Activated B cell treated with CpG ODN at 0.5 μM for 24 hours (primary cell): ENCODE measurements at regions of chr7 and their contacts with region 1.

Region 1: DNA sequence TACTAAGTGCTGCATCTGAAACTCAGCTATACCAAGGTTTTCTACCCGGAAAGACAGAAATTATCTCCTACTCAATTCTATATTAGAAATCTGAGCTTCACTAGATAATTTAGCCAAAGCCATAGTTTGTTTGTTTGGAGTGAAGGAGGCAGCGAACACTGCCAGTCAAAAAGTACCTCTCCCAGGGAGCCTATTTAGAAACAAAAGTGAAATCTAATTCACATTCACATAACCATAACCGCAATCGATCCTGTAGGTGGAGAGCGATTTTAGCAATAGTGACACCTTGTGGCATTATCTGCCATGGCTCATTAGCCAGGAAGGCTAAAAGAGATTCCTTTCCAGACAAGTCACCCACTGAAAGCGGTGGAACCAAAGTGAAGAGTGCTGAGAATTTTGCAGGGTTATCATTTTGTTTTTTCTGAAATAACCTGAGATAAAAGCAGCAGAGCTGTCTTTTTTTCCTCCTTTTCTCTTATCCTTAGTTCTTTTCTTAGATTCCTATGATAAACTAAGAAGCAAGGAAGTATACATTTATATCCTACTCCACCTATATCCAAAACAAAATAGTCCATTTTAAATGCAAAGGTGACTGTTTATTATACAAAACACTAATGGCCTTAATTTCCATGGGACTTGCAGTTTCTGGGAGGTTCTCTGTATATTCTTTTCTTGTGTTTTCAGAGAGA is 83.7 kb upstream of the BET1 start:
- DNase-seq: no peak
- ATAC-seq: peak; percentile 92
- H3K4me3 Mint-ChIP-seq: peak overlapping the region; percentile 82
- H3K27ac Mint-ChIP-seq: peak overlapping the region; percentile 89
- H3K4me1 Mint-ChIP-seq: peaks cover 19% of the 10 kb centered on the region
- H3K27me3 Mint-ChIP-seq: no peaks in the 10 kb centered on the region
- CTCF ChIP-seq: no peak

Region 2: GRCh38 chr7:92953657-92954056 is 1134.2 kb before region 1 on chr7:
- CTCF ChIA-PET with region 1: no interaction called
- POLR2A ChIA-PET with region 1: no interaction called
- intact Hi-C with region 1: no loop called
- DNase-seq: no peak
- ATAC-seq: no peak
- H3K4me3 Mint-ChIP-seq: no peak overlapping the region
- H3K27ac Mint-ChIP-seq: no peak overlapping the region
- H3K4me1 Mint-ChIP-seq: no peaks in the 10 kb centered on the region
- H3K27me3 Mint-ChIP-seq: no peaks in the 10 kb centered on the region
- CTCF ChIP-seq: no peak

Region 3: DNA sequence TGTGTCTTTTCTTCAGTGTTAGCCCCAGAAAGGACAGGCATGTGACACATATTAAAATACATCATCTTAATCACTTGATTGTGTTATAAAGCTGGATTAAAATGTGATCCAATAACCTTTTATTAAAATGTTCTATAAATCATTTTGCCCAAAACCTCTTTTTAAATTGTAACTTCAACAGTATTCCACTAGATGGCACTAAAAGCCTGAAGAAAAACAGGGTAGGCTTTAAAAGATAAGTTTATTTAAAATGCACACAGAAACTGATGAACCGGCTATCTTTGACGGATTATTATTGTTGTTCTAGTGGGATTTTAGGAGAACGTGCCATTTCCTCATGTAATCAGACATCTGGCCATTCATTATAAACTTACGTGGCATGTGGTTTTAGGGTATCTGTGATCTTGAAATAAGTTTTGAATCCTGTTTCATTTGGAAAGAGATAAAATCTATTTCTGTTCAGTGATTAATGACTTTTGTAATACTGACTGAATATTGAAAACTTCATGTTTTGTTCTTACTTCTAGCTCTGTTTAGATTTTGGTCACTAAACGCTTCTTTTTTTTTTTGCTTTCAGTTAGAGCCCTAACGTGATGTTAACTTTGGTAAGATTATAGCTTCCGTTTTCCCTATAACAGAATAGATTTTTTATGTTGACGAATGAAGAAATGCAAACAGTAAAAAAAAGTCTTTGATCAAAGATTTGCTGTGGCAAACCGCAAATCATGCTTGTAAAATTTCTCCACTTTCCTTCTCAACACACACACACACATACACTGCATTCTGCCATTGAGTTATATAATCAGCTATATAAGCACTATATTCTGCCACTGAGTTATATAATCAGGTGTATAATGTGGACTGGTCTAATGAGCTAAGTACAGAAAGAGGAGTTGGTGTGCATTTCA is 842.0 kb before region 1 on chr7:
- CTCF ChIA-PET with region 1: interaction called, 3 read pairs
- POLR2A ChIA-PET with region 1: no interaction called
- intact Hi-C with region 1: loop called (anchors 1 kb)
- DNase-seq: no peak
- ATAC-seq: peak; percentile 25
- H3K4me3 Mint-ChIP-seq: no peak overlapping the region
- H3K27ac Mint-ChIP-seq: no peak overlapping the region
- H3K4me1 Mint-ChIP-seq: peaks cover 2% of the 10 kb centered on the region
- H3K27me3 Mint-ChIP-seq: no peaks in the 10 kb centered on the region
- CTCF ChIP-seq: peak; percentile 42

Region 4: DNA sequence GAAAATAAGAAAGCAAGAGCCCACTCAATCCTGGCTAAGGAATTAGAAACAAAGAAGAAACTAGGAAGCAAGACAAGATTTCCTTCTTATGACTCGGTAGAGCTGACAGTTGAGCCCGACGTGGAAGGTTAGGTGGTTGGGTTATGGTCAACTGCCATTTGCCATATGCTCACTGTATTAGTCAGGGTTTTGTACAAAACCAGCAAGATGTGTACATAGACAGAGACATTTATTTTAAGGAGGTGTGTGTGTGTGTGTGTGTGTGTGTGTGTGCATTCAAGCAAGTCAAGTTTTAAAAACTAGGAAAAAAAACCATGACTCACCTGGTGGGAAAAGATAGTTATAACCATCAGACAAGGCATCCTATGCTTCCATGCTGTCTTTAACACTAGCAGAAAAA is 697.1 kb before region 1 on chr7:
- CTCF ChIA-PET with region 1: no interaction called
- POLR2A ChIA-PET with region 1: no interaction called
- intact Hi-C with region 1: no loop called
- DNase-seq: no peak
- ATAC-seq: no peak
- H3K4me3 Mint-ChIP-seq: no peak overlapping the region
- H3K27ac Mint-ChIP-seq: no peak overlapping the region
- H3K4me1 Mint-ChIP-seq: no peaks in the 10 kb centered on the region
- H3K27me3 Mint-ChIP-seq: peaks cover 13% of the 10 kb centered on the region
- CTCF ChIP-seq: no peak

Region 5: GRCh38 chr7:93622036-93623033 is 465.5 kb before region 1 on chr7:
- CTCF ChIA-PET with region 1: no interaction called
- POLR2A ChIA-PET with region 1: no interaction called
- intact Hi-C with region 1: loop called (anchors 2 kb)
- DNase-seq: no peak
- ATAC-seq: no peak
- H3K4me3 Mint-ChIP-seq: no peak overlapping the region
- H3K27ac Mint-ChIP-seq: no peak overlapping the region
- H3K4me1 Mint-ChIP-seq: no peaks in the 10 kb centered on the region
- H3K27me3 Mint-ChIP-seq: peaks cover 1% of the 10 kb centered on the region
- CTCF ChIP-seq: no peak

Region 6: GRCh38 chr7:93861325-93861949 is 226.4 kb before region 1 on chr7:
- CTCF ChIA-PET with region 1: no interaction called
- POLR2A ChIA-PET with region 1: no interaction called
- intact Hi-C with region 1: no loop called
- DNase-seq: no peak
- ATAC-seq: no peak
- H3K4me3 Mint-ChIP-seq: no peak overlapping the region
- H3K27ac Mint-ChIP-seq: no peak overlapping the region
- H3K4me1 Mint-ChIP-seq: no peaks in the 10 kb centered on the region
- H3K27me3 Mint-ChIP-seq: peaks cover 6% of the 10 kb centered on the region
- CTCF ChIP-seq: no peak

Region 7: DNA sequence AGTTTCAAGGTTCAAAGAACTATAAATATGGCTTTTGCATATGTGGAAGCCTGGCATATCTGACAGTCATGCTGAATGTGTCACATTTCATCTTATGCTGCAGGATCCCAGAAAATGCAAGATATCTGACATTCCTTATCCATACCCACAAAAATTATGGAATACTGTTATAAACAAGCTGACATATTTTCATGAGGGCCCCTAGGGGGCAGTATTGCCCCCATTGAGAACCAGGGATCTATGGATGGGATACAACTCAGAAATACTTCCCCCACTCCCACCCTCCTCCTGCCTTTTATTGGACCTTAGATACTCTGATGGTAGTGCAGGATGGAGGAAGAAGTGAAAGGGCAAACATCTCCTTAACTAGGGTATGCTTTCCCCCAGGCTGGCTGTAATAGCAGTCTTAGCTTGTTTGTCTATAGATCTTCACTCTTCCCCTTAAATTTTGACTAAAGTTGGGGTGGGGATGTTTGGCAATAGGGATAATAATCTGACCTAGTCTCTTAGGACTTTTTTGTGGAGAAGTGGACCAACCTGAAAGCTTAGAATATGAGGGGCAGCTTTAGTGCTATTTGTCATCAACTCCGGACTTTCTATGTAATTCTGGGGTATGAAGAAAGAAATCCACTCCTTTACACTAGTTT is 184.9 kb before region 1 on chr7:
- CTCF ChIA-PET with region 1: interaction called, 117 read pairs
- POLR2A ChIA-PET with region 1: no interaction called
- intact Hi-C with region 1: loop called (anchors 1 kb)
- DNase-seq: no peak
- ATAC-seq: no peak
- H3K4me3 Mint-ChIP-seq: no peak overlapping the region
- H3K27ac Mint-ChIP-seq: no peak overlapping the region
- H3K4me1 Mint-ChIP-seq: no peaks in the 10 kb centered on the region
- H3K27me3 Mint-ChIP-seq: peaks cover 17% of the 10 kb centered on the region
- CTCF ChIP-seq: peak; percentile 74

Region 8: DNA sequence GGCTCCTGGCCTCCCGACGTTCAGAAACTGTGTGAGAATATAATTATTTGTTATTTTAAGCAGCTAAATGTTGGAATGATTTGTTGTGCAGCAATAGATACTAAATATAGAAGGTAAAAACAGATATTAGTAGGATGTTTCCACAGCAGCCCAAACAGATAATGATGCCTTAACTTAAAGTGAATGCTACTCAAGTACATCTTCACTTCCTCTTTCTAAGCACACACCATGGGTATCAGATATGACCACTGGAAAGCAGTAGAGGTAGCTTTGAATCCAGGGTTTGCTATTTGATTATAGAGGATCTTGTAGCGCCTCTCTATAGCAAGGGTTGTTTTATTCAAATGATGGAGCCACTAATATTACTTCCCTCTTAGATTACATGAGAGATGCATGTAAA is 45.4 kb before region 1 on chr7:
- CTCF ChIA-PET with region 1: interaction called, 5 read pairs
- POLR2A ChIA-PET with region 1: no interaction called
- intact Hi-C with region 1: loop called (anchors 1 kb)
- DNase-seq: no peak
- ATAC-seq: peak; percentile 80
- H3K4me3 Mint-ChIP-seq: no peak overlapping the region
- H3K27ac Mint-ChIP-seq: no peak overlapping the region
- H3K4me1 Mint-ChIP-seq: peaks cover 60% of the 10 kb centered on the region
- H3K27me3 Mint-ChIP-seq: no peaks in the 10 kb centered on the region
- CTCF ChIP-seq: no peak

Region 9: DNA sequence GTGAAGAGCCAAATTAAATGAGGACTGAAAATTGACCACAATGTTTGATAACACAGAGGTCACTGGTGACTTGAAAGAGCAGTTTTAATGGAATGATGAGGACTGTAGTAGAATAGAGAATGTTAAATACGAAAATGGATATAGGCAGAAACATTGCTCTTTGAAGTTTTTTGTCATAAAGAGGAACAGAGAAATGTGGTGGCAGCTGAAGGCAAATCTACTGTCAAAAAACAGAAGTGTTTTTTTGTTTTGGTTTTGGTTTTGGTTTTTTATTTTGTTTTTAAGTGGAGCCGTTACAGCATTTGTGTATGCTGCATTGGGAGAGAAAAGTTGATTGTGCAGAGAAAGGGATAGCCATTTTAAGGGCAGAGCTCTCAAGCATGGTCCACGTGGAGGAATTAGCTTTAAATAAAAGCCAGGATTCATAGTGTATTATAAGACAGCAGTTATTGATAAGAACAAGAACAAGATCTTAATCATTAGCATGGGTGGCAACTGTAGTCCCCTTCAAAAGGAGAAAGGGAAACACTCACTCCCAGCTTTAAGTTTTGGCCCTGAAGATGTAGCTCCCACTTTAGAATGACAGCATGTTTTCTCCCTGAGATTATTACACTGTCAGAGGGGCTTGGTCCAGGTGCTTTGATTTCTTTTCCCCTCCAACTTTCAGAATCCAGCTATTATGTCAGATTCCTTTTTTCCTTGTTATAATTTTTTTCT is 73.1 kb after region 1 on chr7:
- CTCF ChIA-PET with region 1: interaction called, 6 read pairs
- POLR2A ChIA-PET with region 1: no interaction called
- intact Hi-C with region 1: loop called (anchors 1 kb)
- DNase-seq: no peak
- ATAC-seq: peak; percentile 79
- H3K4me3 Mint-ChIP-seq: peak overlapping the region; percentile 78
- H3K27ac Mint-ChIP-seq: peak overlapping the region; percentile 89
- H3K4me1 Mint-ChIP-seq: peaks cover 41% of the 10 kb centered on the region
- H3K27me3 Mint-ChIP-seq: no peaks in the 10 kb centered on the region
- CTCF ChIP-seq: no peak

Region 10: DNA sequence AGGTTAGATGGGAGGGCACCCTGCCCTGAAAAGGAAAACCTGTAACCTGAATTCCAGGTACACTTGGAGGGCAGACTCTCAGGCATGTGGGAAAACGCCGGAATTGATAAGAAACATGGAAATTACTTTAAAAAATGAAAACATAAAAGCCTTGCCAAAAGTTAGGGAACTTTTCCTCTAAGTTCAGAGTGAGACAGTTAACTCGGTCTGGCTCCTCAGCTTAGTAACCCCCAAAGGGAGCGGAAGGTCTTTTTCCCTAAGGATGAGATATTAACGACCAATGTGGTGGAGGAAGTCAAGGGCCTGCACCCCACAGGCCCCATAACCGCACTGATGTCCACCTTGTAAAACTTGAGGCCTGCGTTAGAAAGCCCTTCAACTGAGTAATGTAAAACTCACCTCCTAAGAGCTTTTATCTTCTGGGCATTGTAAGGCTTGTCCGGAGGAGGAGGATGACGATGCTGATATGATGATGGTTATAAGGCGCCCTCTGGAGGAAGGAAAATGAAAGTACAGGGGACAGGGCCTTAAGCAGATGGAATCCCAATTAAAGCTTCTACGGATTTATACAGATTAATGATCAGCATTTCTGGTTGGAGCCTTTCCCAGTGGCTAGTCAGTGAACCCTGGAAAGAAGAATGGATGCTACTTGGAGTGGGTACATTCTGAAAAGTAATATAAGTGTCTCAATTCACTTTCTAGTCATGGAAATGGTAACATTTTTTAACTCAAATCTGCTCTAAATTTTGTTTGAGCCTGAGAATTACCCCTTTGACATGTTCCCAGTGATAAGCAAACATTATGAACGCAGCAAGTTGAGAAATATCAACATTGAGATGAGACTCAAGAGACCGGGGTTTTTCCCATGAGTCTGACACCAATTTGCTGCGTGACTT is 307.6 kb after region 1 on chr7:
- CTCF ChIA-PET with region 1: interaction called, 3 read pairs
- POLR2A ChIA-PET with region 1: no interaction called
- intact Hi-C with region 1: loop called (anchors 1 kb)
- DNase-seq: no peak
- ATAC-seq: peak; percentile 91
- H3K4me3 Mint-ChIP-seq: peak overlapping the region; percentile 67
- H3K27ac Mint-ChIP-seq: no peak overlapping the region
- H3K4me1 Mint-ChIP-seq: peaks cover 11% of the 10 kb centered on the region
- H3K27me3 Mint-ChIP-seq: peaks cover 30% of the 10 kb centered on the region
- CTCF ChIP-seq: peak; percentile 75

Region 11: GRCh38 chr7:94848531-94848930 is 760.7 kb after region 1 on chr7:
- CTCF ChIA-PET with region 1: no interaction called
- POLR2A ChIA-PET with region 1: no interaction called
- intact Hi-C with region 1: no loop called
- DNase-seq: no peak
- ATAC-seq: no peak
- H3K4me3 Mint-ChIP-seq: no peak overlapping the region
- H3K27ac Mint-ChIP-seq: no peak overlapping the region
- H3K4me1 Mint-ChIP-seq: no peaks in the 10 kb centered on the region
- H3K27me3 Mint-ChIP-seq: no peaks in the 10 kb centered on the region
- CTCF ChIP-seq: no peak